ENCODE measurements at regions of chr4 and their contacts with region 1.

Region 1: GRCh38 chr4:38902695-38903094 is 35.1 kb downstream of the FAM114A1 start:
- DNase-seq: peak in 1 of 2 experiments; percentile 43
- H3K4me3 ChIP-seq: no peak overlapping the region
- H3K27ac ChIP-seq: no peak overlapping the region
- H3K4me1 ChIP-seq: no peaks in the 10 kb centered on the region
- H3K27me3 ChIP-seq: no peaks in the 10 kb centered on the region
- CTCF ChIP-seq: peak; percentile 63

Region 2: DNA sequence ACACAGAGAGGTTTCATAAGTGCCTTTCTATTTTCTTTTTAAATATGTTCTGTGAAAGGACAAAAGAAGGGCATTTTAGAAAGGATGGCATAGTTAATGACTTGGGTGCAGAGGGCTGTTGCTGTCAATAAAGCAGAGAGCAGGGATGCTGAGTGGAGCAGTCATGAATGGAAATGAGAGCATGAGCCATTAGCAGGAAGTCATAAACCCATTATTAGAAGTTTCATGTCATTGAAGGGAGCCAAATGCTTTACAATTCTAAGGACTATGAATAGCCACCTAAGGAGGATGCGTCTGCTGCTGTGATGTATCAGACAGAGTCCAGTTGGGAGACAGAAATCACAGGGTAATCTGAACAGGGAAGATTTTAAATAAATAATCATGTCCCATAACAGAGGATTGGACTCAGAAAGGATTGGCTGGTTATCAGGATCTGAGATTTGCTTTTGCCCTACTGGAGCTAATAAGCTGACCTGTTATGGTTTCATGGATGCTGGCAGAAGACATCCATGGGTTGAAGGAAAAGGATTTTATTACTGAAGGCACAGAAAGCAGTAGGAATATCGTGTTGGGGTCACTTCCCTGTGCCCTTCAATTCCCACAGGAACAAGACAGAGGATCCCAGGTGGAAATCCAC is 232.1 kb after region 1 on chr4:
- CTCF ChIA-PET with region 1: interaction called, 6 read pairs
- POLR2A ChIA-PET with region 1: no interaction called
- intact Hi-C with region 1: loop called (anchors 1 kb)
- DNase-seq: no peak
- H3K4me3 ChIP-seq: no peak overlapping the region
- H3K27ac ChIP-seq: no peak overlapping the region
- H3K4me1 ChIP-seq: no peaks in the 10 kb centered on the region; the same call in 1 of the 2 replicates
- H3K27me3 ChIP-seq: no peaks in the 10 kb centered on the region
- CTCF ChIP-seq: no peak

Region 3: DNA sequence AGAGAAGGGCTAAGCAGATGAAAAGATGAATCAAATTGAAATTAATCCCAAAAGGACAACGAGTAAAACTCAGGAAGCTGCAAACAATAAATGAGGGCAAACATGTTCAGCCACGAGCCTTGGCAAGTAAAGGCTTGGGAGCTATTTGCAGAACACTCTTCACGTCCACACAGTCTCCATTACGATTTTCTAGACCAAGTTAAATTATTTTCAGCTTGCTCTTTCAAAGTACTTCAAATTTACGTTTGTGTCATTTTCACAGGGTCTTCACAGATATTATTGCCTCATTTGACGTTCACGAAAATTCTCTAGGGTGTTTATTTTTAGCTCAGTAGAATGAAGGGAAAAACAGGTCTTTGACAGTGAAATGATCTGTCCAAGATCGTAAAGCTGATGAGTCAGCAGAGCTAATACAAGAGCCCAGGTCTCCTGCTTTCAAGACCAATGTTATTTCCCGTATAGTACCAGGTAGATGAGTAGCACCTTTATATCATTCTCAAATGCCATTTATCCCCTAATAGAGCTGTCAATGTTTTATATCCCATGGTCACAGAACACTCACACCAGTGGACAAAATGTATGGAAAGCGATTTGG is 524.9 kb after region 1 on chr4:
- CTCF ChIA-PET with region 1: interaction called, 17 read pairs
- POLR2A ChIA-PET with region 1: no interaction called
- intact Hi-C with region 1: no loop called
- DNase-seq: no peak
- H3K4me3 ChIP-seq: no peak overlapping the region
- H3K27ac ChIP-seq: no peak overlapping the region
- H3K4me1 ChIP-seq: no peaks in the 10 kb centered on the region
- H3K27me3 ChIP-seq: no peaks in the 10 kb centered on the region
- CTCF ChIP-seq: no peak